ENCODE measurements at regions of chr16 and their contacts with region 1.

Region 1: DNA sequence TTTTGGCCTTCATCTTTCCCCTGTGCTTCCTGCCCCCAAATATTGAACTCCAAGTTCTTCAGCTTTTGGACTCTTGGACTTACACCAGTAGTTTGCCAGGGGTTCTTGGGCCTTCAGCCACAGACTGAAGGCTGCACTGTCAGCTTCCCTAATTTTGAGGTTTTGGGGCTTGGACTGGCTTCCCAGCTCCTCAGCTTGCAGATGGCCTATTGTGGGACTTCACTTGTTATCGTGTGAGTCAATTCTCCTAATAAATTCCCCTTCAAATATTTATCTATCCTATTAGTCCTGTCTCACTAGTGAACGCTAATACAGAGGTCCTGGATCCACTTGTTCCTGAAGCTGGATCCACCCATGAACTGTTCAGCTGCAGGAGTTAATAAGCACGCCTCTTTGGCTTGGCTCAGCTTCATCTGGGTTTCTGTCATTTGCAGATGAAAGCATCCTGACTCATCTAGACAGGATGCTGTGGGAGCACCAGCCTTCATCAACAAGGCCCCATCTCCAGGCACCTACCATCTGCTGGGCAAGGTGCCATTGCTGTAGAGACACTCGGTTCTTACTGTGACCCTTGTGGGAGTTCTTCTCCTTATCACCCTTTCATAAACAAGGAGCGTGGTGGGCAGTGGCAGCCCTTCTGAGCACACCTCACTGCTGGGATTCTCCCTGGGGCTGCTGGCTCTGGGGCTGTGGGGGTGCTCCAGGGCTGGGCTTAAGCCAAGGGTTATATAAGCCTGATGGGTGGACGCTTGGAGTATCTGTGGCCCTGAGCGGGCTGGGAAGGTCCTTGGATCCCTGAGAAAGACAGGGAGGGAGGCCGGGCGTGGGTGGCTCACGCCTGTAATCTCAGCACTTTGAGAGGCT is 23.1 kb downstream of the LAT start:
- DNase-seq: peak; percentile 89
- H3K4me3 Mint-ChIP-seq: peak overlapping the region; percentile 69
- H3K27ac Mint-ChIP-seq: peak overlapping the region; percentile 95
- H3K4me1 Mint-ChIP-seq: peaks cover 43% of the 10 kb centered on the region
- H3K27me3 Mint-ChIP-seq: no peaks in the 10 kb centered on the region

Region 2: DNA sequence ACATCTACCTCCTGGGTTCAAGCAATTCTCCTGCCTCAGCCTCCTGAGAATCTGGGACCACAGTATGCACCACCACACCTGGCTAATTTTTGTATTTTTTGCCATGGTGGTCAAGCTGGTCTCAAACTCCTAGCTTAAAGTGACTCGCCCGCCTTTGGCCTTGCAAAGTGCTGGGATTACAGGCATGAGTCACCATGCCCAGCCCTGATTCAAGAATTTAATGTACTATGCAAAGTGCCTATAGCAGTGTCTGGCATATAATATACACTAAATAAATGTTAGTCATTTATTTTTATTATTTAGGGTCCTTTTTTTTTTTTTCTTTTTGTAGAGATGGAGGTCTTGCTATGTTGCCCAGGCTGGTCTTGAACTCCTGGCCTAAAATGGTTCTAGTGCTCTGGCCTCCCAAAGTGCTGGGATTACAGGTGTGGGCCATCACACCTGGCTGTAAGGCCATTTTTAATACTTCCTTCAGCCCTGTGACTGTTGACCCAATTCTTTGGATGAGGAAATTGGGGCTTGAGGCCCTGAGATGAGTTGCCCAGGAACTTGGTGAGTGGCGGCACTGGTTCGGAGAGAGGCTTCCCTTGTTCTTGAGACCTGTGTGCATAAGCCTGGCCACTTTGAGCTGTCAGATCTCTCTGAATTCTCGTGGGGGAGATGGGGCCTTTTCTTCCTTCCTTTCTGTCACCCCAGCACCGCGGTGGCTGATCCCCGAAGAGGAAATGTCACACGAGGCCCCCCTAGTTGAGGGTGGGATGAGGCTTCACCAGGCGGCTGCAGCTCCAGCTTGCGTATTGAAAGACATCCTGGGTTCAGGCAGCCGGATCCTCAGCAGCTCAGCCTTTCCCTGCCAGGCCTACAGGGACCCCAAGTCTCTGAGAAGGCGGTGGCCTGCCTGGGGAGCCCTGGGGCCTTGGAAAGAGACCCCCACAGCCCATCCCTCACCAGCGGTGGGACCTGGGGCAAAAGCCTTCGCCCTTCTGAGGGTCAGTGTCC is 15.6 kb after region 1 on chr16:
- intact Hi-C with region 1: loop called (anchors 1 kb)
- DNase-seq: no peak
- H3K4me3 Mint-ChIP-seq: no peak overlapping the region
- H3K27ac Mint-ChIP-seq: peak overlapping the region; percentile 62
- H3K4me1 Mint-ChIP-seq: peaks cover 45% of the 10 kb centered on the region
- H3K27me3 Mint-ChIP-seq: no peaks in the 10 kb centered on the region

Region 3: DNA sequence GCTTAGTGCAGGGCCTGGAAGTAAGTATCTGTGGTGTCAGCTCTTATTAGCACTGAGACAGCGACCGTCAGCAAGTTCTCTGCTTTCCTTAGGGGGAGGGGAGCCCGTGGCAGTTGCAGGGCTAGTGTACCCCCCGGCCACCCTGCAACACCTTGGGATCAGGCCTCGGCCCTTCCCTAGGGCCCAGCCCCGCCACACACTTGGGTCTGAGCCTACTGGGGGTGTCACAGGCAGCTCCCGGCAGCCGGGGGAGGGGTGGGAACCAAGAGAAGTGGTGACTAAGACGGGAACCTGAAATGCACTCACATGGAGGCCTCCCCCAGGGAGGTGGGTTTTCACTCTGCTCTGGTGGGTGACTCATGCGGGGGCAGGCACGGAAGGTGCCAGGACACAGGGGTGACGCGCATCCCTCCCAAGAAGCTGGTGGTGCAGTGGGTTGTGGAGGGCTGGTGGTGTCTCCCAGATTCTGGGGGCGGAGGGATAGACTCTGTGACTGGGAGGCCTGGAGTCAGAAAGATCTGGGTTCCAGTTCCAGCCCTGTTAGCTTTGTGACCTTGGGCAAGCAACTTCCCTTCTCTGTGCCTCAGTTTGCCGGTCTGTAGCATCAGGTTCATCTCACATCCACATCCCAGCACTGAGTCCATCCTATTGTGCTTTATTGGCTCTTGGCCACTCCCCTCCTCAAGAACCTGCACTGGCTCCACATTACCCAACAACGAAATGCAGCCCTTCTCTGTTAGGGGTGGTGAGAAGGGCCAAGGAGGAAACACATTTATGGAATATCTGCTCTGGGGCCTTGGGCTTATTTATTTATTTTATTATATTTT is 21.4 kb after region 1 on chr16:
- intact Hi-C with region 1: loop called (anchors 1 kb)
- DNase-seq: peak; percentile 84
- H3K4me3 Mint-ChIP-seq: peak overlapping the region; percentile 52
- H3K27ac Mint-ChIP-seq: peak overlapping the region; percentile 85
- H3K4me1 Mint-ChIP-seq: peaks cover 28% of the 10 kb centered on the region
- H3K27me3 Mint-ChIP-seq: no peaks in the 10 kb centered on the region

Measured in activated CD4-positive, alpha-beta T cell treated with anti-CD3 and anti-CD28 coated beads, Interleukin-2, amount 10 ng/mL, durations not matched to agents 24 days and 14 days (primary cell).